ENCODE measurements at regions of chr6 and their contacts with region 1.

Region 1: DNA sequence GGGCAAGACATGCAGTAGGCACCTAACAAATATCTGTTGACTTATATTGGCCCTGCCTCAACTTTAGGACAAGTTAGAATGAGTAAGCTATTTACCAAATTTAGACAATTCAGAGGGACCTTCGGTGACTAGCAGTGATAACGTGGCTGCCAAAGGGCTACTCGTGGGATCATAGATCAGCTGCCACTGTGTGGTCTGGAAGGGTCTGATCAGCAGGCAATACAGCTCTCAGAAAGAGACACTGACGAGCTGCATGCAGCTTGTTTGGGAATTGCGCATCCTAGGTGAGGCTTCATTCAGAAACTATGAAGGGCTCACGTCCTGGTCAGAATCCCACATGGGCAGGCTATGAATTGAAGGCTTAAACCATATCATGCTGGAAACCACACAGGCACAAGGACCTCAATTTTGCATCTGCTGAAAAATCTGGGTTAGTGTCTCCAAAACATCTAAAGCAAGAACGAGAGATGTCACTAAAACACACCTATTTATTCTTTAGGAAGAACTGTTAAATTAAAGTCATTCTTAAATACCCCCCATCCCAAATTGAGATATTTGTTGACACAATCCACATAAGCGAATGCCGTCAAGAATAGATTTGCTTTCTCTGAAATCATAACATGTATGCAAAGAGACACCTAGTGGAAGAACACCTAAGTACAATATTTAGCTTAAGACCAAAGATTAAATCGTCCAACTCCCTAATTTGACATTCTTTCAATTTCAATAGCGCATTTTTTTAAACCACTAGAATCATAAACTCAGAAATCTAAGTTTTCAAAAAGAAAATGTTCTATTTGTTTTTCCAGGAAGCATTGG is 79.6 kb downstream of the IPCEF1 start:
- DNase-seq: peak in 7 of 9 donors; percentile 28 to 68 (median 58)
- ATAC-seq: peak; percentile 84
- H3K4me3 ChIP-seq: peak overlapping the region; percentile 23
- H3K4me3 Mint-ChIP-seq: peak overlapping the region; percentile 59 to 91 (median 68)
- H3K27ac ChIP-seq: peak overlapping the region; percentile 27
- H3K27ac Mint-ChIP-seq: peak overlapping the region in 8 of 9 donors; percentile 44 to 75 (median 64)
- H3K4me1 ChIP-seq: peaks cover 5 to 27% of the 10 kb centered on the region in 2 donors
- H3K4me1 Mint-ChIP-seq: peaks cover 20 to 50% (median 44%) of the 10 kb centered on the region in 7 donors
- H3K27me3 ChIP-seq: no peaks in the 10 kb centered on the region
- H3K27me3 Mint-ChIP-seq: peaks cover 0 to 16% (median 0%) of the 10 kb centered on the region in 5 donors

Region 2: DNA sequence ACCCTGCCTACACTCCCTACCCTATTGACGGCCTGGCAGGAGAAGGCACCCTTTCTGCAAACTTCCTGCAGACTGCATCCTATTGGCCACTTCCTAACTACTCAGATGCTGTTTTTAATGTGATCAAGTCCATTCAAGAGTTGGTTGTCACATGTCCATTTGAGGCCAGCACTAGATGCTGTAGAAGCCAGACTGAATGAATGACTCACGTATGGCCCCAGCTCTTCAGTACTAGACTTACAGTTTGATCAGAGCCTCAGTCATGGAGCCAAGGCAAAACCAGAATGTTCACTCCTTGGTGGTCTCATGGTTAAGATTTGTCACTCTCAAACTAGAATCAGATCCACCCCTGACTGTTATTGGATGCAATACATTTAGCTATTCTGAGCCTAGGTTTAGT is 136.3 kb before region 1 on chr6:
- CTCF ChIA-PET with region 1: interaction called, 11 read pairs
- POLR2A ChIA-PET with region 1: no interaction called
- intact Hi-C with region 1: no loop called
- DNase-seq: no peak
- ATAC-seq: no peak
- H3K4me3 ChIP-seq: no peak overlapping the region
- H3K4me3 Mint-ChIP-seq: no peak overlapping the region
- H3K27ac ChIP-seq: no peak overlapping the region
- H3K27ac Mint-ChIP-seq: no peak overlapping the region
- H3K4me1 ChIP-seq: no peaks in the 10 kb centered on the region
- H3K4me1 Mint-ChIP-seq: peaks cover 0 to 7% (median 6%) of the 10 kb centered on the region in 7 donors
- H3K27me3 ChIP-seq: no peaks in the 10 kb centered on the region
- H3K27me3 Mint-ChIP-seq: peaks cover 0 to 10% (median 5%) of the 10 kb centered on the region in 5 donors

Region 3: GRCh38 chr6:154218301-154218700 is 58.7 kb before region 1 on chr6:
- CTCF ChIA-PET with region 1: interaction called, 7 read pairs
- POLR2A ChIA-PET with region 1: interaction called, 6 read pairs
- intact Hi-C with region 1: loop called in 1 of 2 experiments (anchors 1 kb)
- DNase-seq: peak in 3 of 9 donors; percentile 17 to 34 (median 33)
- ATAC-seq: peak; percentile 54
- H3K4me3 ChIP-seq: no peak overlapping the region
- H3K4me3 Mint-ChIP-seq: peak overlapping the region in 9 of 10 donors; percentile 39 to 86 (median 78)
- H3K27ac ChIP-seq: peak overlapping the region; percentile 38
- H3K27ac Mint-ChIP-seq: peak overlapping the region in 8 of 9 donors; percentile 66 to 96 (median 88)
- H3K4me1 ChIP-seq: peaks cover 0 to 45% of the 10 kb centered on the region in 2 donors
- H3K4me1 Mint-ChIP-seq: peaks cover 22 to 79% (median 72%) of the 10 kb centered on the region in 7 donors
- H3K27me3 ChIP-seq: no peaks in the 10 kb centered on the region
- H3K27me3 Mint-ChIP-seq: no peaks in the 10 kb centered on the region

Region 4: DNA sequence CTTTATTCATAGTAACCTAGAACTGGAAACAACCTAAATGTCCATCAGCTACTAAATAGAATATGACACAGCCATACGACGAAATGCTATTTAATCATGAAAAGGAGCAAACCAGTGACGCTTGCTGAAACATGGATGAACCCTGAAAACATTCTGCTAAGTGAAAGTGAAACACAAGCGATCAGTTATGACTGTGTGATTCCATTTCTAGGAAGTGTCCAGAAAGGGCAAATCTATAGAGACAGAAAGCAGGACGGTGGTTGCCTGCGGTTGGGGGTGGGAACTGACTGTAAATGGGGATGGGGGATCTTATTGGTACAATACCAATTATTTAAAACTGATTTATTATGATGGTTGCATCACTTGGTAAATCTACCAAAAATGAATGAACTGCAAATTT is 47.2 kb before region 1 on chr6:
- CTCF ChIA-PET with region 1: interaction called, 7 read pairs
- POLR2A ChIA-PET with region 1: interaction called, 3 read pairs
- intact Hi-C with region 1: loop called in 1 of 2 experiments (anchors 1 kb)
- DNase-seq: peak in 2 of 9 donors; percentile 41 to 56
- ATAC-seq: peak; percentile 64
- H3K4me3 ChIP-seq: peak overlapping the region; percentile 30
- H3K4me3 Mint-ChIP-seq: peak overlapping the region; percentile 75 to 89 (median 78)
- H3K27ac ChIP-seq: peak overlapping the region; percentile 41
- H3K27ac Mint-ChIP-seq: peak overlapping the region; percentile 66 to 94 (median 86)
- H3K4me1 ChIP-seq: peaks cover 32 to 63% of the 10 kb centered on the region in 2 donors
- H3K4me1 Mint-ChIP-seq: peaks cover 55 to 91% (median 87%) of the 10 kb centered on the region in 7 donors
- H3K27me3 ChIP-seq: no peaks in the 10 kb centered on the region
- H3K27me3 Mint-ChIP-seq: no peaks in the 10 kb centered on the region

Region 5: DNA sequence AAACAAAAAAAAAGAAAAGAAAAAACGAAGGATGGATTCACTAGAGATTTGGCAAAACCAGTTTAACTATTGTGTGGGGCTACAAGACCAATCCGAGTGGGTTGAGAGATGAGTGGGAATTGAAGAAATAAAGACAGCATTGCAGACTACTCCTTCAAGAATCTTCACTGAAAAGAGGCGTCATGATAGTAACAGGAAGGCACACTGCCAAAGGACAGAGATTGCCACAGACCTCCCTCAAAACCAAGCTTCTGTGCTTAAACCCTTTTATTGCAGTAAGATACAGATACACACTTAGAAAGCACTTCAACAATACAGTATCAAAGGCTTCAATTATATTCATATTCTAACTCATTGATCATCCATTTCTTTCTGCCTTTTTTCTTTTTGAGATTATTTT is 24.3 kb before region 1 on chr6:
- CTCF ChIA-PET with region 1: interaction called, 39 read pairs
- POLR2A ChIA-PET with region 1: interaction called, 13 read pairs
- intact Hi-C with region 1: loop called (anchors 1 kb)
- DNase-seq: peak in 2 of 9 donors; percentile 38
- ATAC-seq: no peak
- H3K4me3 ChIP-seq: no peak overlapping the region
- H3K4me3 Mint-ChIP-seq: peak overlapping the region in 9 of 10 donors; percentile 35 to 87 (median 69)
- H3K27ac ChIP-seq: peak overlapping the region; percentile 22
- H3K27ac Mint-ChIP-seq: peak overlapping the region in 8 of 9 donors; percentile 90 to 98 (median 96)
- H3K4me1 ChIP-seq: peaks cover 35 to 51% of the 10 kb centered on the region in 2 donors
- H3K4me1 Mint-ChIP-seq: peaks cover 49 to 93% (median 83%) of the 10 kb centered on the region in 7 donors
- H3K27me3 ChIP-seq: no peaks in the 10 kb centered on the region
- H3K27me3 Mint-ChIP-seq: peaks cover 0 to 27% (median 0%) of the 10 kb centered on the region in 5 donors

Region 6: GRCh38 chr6:154370545-154370944 is 93.5 kb after region 1 on chr6:
- CTCF ChIA-PET with region 1: interaction called, 11 read pairs
- POLR2A ChIA-PET with region 1: no interaction called
- intact Hi-C with region 1: loop called (anchors 1 kb)
- DNase-seq: peak in 6 of 9 donors; percentile 13 to 37 (median 24)
- ATAC-seq: peak; percentile 58
- H3K4me3 ChIP-seq: no peak overlapping the region
- H3K4me3 Mint-ChIP-seq: peak overlapping the region in 1 of 10 donors; percentile 24
- H3K27ac ChIP-seq: no peak overlapping the region
- H3K27ac Mint-ChIP-seq: peak overlapping the region in 2 of 9 donors; percentile 20 to 63
- H3K4me1 ChIP-seq: no peaks in the 10 kb centered on the region
- H3K4me1 Mint-ChIP-seq: peaks cover 0 to 20% (median 11%) of the 10 kb centered on the region in 7 donors
- H3K27me3 ChIP-seq: no peaks in the 10 kb centered on the region
- H3K27me3 Mint-ChIP-seq: peaks cover 0 to 3% (median 0%) of the 10 kb centered on the region in 5 donors

Measured in naive thymus-derived CD4-positive, alpha-beta T cell (primary cell).